CD4-positive, alpha-beta T cell (primary cell): ENCODE measurements at regions of chr10 and their contacts with region 1.

Region 1: DNA sequence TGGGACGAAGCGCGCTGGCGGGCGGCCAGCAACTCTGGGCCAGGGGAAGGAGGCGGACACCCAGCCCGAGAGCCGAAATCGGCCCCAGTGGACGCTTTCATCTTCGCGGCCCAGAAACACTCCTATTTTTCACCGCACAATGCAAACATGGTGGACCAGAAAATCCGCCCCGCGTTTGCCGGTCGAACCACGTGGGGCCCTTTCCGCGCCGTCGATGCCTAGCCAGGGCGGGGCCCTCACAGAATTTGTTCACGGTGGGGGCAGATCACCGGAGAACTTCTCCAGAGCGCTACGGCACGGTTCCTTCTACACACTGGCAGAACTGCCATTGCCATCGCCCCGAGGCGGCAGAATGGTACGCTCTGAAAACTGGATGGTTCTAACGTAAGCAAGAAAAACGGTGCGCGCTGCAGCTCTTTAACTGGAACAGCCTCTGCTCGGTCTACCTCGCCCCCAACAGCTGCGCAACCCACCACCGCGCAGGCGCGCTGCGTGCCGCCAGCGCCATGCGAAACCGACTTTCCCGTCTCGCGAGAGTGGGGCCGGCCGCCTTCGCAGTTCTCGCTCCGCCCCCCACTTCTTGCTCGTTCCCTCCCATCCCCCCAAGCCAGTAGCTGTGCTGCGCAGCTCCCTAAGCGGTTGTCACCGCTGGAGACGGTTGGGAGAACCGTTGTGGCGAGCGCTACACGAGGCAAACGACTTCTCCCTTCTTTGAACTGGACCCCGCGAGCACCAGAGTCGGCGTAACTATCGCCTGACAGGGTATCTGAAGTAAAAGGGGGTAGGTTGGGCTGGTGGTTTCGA is at the start of gene HNRNPH3:
- DNase-seq: peak; percentile 97 to 100 (median 98)
- ATAC-seq: peak; percentile 78
- H3K4me3 ChIP-seq: peak within 1 kb of the TSS; percentile 95
- H3K4me3 Mint-ChIP-seq: peak within 1 kb of the TSS; percentile 100
- H3K27ac ChIP-seq: peak within 1 kb of the TSS; percentile 94 to 97
- H3K27ac Mint-ChIP-seq: peak within 1 kb of the TSS; percentile 98
- H3K4me1 ChIP-seq: peaks cover 18% of the 10 kb centered on the region
- H3K4me1 Mint-ChIP-seq: peaks cover 52% of the 10 kb centered on the region
- H3K27me3 ChIP-seq: no peaks in the 10 kb centered on the region
- H3K27me3 Mint-ChIP-seq: no peaks in the 10 kb centered on the region
- CTCF ChIP-seq: no peak
- total RNA-seq, gene HNRNPH3: 227 to 228 TPM

Region 2: GRCh38 chr10:66378117-66378876 is 1953.4 kb before region 1 on chr10:
- CTCF ChIA-PET with region 1: no interaction called
- POLR2A ChIA-PET with region 1: no interaction called
- intact Hi-C with region 1: no loop called
- DNase-seq: no peak
- ATAC-seq: no peak
- H3K4me3 ChIP-seq: no peak overlapping the region
- H3K4me3 Mint-ChIP-seq: no peak overlapping the region
- H3K27ac ChIP-seq: no peak overlapping the region
- H3K27ac Mint-ChIP-seq: no peak overlapping the region
- H3K4me1 ChIP-seq: no peaks in the 10 kb centered on the region
- H3K4me1 Mint-ChIP-seq: no peaks in the 10 kb centered on the region
- H3K27me3 ChIP-seq: no peaks in the 10 kb centered on the region
- H3K27me3 Mint-ChIP-seq: no peaks in the 10 kb centered on the region
- CTCF ChIP-seq: no peak

Region 3: GRCh38 chr10:67858971-67859370 is 472.7 kb before region 1 on chr10:
- CTCF ChIA-PET with region 1: no interaction called
- POLR2A ChIA-PET with region 1: interaction called, 8 read pairs
- intact Hi-C with region 1: loop called (anchors 5 kb)
- DNase-seq: no peak
- ATAC-seq: no peak
- H3K4me3 ChIP-seq: no peak overlapping the region
- H3K4me3 Mint-ChIP-seq: no peak overlapping the region
- H3K27ac ChIP-seq: no peak overlapping the region
- H3K27ac Mint-ChIP-seq: no peak overlapping the region
- H3K4me1 ChIP-seq: peaks cover 2% of the 10 kb centered on the region
- H3K4me1 Mint-ChIP-seq: peaks cover 5% of the 10 kb centered on the region
- H3K27me3 ChIP-seq: no peaks in the 10 kb centered on the region
- H3K27me3 Mint-ChIP-seq: no peaks in the 10 kb centered on the region
- CTCF ChIP-seq: no peak

Region 4: DNA sequence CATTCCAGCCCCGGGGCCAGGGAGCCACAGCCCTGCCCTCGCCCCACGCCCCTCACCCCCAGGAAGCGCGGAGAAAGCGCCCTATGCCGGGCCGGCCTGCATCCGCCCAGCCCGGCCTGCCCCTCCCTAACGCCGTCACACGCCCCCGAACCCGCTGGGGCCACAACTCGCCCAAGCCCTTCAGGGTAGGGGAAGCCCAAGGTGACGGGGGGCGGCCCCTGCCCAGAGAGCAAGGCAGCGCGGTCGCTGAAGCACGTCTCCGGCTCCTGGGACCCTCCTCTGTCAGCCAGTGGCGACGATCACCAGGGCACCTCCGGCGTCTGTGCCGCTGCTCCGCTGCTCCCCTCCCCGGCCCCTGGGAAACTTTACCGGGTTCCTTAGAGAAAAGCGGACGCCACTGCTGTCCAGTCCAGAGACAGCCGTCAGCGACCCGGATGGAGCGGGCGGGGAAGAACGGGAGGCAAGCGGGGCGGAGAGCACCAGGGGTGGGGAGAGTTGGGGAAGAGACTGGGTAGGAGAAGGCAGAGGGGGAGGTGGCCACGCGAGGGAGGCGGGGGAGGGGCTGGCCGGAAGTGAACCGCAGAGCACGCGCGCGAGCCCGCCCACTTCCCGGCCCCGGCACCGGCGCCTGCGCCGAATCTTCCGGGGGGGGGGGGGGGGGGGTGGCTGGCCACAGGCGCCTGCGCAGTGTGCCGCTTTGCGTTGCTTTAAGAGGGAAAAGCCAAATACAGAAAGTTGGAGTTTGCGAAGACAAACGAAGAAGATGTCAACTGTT is 256.7 kb before region 1 on chr10 and contains the start of gene HERC4:
- CTCF ChIA-PET with region 1: no interaction called
- POLR2A ChIA-PET with region 1: interaction called, 5 read pairs
- intact Hi-C with region 1: loop called (anchors 5 kb)
- DNase-seq: peak; percentile 84 to 97 (median 90)
- ATAC-seq: peak; percentile 92
- H3K4me3 ChIP-seq: peak within 1 kb of the TSS; percentile 88
- H3K4me3 Mint-ChIP-seq: peak within 1 kb of the TSS; percentile 93
- H3K27ac ChIP-seq: peak within 1 kb of the TSS; percentile 94
- H3K27ac Mint-ChIP-seq: peak within 1 kb of the TSS; percentile 89
- H3K4me1 ChIP-seq: peaks cover 6% of the 10 kb centered on the region
- H3K4me1 Mint-ChIP-seq: peaks cover 47% of the 10 kb centered on the region
- H3K27me3 ChIP-seq: no peaks in the 10 kb centered on the region
- H3K27me3 Mint-ChIP-seq: no peaks in the 10 kb centered on the region
- CTCF ChIP-seq: no peak
- total RNA-seq, gene HERC4: 46.0 to 46.8 TPM

Region 5: DNA sequence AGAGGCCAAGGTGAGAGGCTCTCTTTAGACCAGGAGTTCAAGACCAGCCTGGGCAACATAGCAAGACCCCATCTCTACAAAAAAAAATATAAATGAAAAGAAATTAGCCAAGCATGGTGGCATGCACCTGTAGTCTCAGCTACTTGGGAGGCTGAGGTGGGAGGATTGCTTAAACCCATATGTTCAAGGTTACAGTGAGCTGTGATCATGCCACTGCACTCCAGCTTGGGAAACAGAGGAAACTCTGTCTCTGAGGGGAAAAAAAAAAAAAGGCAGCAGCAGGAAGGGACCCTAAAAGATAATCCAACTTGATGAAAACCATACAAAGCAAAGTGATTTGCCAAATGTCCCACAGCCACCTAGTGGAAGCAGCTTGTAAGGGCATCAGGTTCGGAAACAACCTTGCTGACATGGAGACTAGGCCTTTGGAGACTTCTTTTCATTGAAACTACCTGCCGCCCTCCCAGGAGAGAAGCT is 16.6 kb after region 1 on chr10:
- CTCF ChIA-PET with region 1: interaction called, 19 read pairs
- POLR2A ChIA-PET with region 1: interaction called, 35 read pairs
- intact Hi-C with region 1: loop called in 1 of 2 experiments (anchors 2 kb)
- DNase-seq: peak; percentile 14 to 76 (median 30)
- ATAC-seq: peak; percentile 86
- H3K4me3 ChIP-seq: no peak overlapping the region
- H3K4me3 Mint-ChIP-seq: no peak overlapping the region
- H3K27ac ChIP-seq: no peak overlapping the region
- H3K27ac Mint-ChIP-seq: peak overlapping the region; percentile 73
- H3K4me1 ChIP-seq: peaks cover 3% of the 10 kb centered on the region
- H3K4me1 Mint-ChIP-seq: peaks cover 6% of the 10 kb centered on the region
- H3K27me3 ChIP-seq: no peaks in the 10 kb centered on the region
- H3K27me3 Mint-ChIP-seq: no peaks in the 10 kb centered on the region
- CTCF ChIP-seq: peak; percentile 76

Region 6: DNA sequence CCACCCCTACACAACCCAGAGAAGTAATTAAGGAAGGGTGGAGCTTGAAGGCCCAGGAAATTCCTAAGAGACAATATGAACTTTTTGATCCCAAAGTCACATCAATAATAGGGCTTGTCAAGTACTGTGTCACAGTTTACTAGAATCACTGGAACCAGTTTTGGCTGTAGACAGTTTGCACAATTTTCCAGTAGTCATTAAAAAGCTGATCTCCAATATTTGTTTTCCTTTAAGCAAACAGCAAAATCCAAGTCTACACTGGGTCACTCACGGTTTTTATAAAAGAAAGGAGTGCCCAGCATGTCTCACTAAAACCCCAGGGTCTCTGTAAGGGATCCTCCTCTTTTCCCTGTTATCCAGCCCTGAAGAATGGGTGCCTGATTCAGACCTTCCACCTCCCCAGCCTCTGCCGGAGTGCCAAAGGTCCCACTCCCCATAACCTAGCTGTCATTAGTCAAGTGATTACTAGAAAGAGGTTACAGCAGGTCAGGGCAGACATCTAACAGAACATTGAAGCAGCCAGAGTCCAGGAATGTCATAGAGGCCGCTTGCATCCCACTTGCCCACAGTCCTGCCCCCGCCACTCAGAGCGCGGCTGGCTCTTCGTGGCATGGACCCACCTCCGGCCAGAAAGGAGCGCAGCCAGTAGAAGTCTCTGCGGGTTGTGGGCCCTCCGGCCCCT is 195.1 kb after region 1 on chr10:
- CTCF ChIA-PET with region 1: no interaction called
- POLR2A ChIA-PET with region 1: interaction called, 5 read pairs
- intact Hi-C with region 1: loop called in 1 of 2 experiments (anchors 2 kb)
- DNase-seq: no peak
- ATAC-seq: peak; percentile 10
- H3K4me3 ChIP-seq: peak overlapping the region; percentile 68
- H3K4me3 Mint-ChIP-seq: peak overlapping the region; percentile 88
- H3K27ac ChIP-seq: peak overlapping the region; percentile 82 to 90
- H3K27ac Mint-ChIP-seq: peak overlapping the region; percentile 96
- H3K4me1 ChIP-seq: peaks cover 16% of the 10 kb centered on the region
- H3K4me1 Mint-ChIP-seq: peaks cover 13% of the 10 kb centered on the region
- H3K27me3 ChIP-seq: no peaks in the 10 kb centered on the region
- H3K27me3 Mint-ChIP-seq: no peaks in the 10 kb centered on the region
- CTCF ChIP-seq: no peak